ENCODE measurements at regions of chr19 and their contacts with region 1.

Region 1: GRCh38 chr19:52897144-52897935 is at the start of gene ZNF320:
- DNase-seq: peak; percentile 88
- H3K4me3 ChIP-seq: peak within 1 kb of the TSS; percentile 62 to 95 (median 70)
- H3K27ac ChIP-seq: peak within 1 kb of the TSS; percentile 80
- H3K4me1 ChIP-seq: no peaks in the 10 kb centered on the region
- H3K27me3 ChIP-seq: no peaks in the 10 kb centered on the region
- CTCF ChIP-seq: no peak
- total RNA-seq, gene ZNF320: 13.3 to 18.5 TPM

Region 2: DNA sequence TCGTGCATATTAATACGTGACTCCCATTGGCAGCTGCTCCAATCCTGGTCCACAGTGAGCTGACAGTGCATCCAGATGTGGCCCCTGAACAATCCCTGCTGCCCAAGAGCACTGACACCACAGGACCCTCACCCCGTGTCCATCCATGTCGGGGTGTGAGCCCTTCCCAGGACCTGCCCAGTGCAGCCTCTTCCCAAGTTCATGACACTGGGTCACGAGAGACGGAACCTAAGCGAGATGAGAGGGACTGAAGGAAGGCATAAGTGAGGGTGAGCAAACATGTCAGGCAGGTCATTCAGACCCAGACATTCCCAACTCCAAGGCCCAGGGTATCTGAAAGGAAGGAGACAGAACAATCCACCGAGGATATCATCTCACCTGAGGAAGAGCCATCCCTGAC is 43.5 kb before region 1 on chr19:
- CTCF ChIA-PET with region 1: no interaction called
- dilution Hi-C with region 1: no loop called
- in situ Hi-C with region 1: no loop called
- intact Hi-C with region 1: loop called (anchors 1 kb)
- DNase-seq: no peak
- H3K4me3 ChIP-seq: no peak overlapping the region
- H3K27ac ChIP-seq: no peak overlapping the region
- H3K4me1 ChIP-seq: peaks cover 3% of the 10 kb centered on the region
- H3K27me3 ChIP-seq: no peaks in the 10 kb centered on the region
- CTCF ChIP-seq: no peak

Region 3: DNA sequence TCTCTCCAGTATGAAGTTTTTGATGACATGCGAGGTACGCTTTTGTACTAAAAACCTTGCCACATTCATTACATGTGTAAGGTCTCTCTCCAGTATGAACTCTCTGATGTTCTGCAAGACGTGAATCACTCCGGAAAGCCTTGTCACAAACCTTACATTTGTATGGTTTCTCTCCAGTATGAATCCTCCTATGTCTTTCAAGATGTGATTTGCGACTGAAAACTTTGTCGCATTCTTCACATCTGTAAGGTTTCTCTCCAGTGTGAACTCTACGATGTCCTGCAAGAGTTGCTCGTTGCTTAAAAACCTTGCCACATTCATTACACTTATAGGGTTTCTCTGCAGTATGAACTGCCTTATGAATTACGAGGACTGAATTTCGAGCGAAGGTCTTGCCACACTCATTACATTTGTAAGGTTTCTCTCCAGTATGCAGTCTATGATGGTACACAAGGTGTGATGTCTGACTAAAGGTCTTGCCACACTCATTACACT is 16.4 kb before region 1 on chr19:
- CTCF ChIA-PET with region 1: no interaction called
- dilution Hi-C with region 1: no loop called
- in situ Hi-C with region 1: no loop called
- intact Hi-C with region 1: no loop called
- DNase-seq: no peak
- H3K4me3 ChIP-seq: no peak overlapping the region
- H3K27ac ChIP-seq: no peak overlapping the region
- H3K4me1 ChIP-seq: no peaks in the 10 kb centered on the region
- H3K27me3 ChIP-seq: no peaks in the 10 kb centered on the region
- CTCF ChIP-seq: no peak

Region 4: GRCh38 chr19:52962394-52963246 is 65.3 kb after region 1 on chr19 and contains the start of gene ZNF816:
- CTCF ChIA-PET with region 1: no interaction called
- dilution Hi-C with region 1: no loop called
- in situ Hi-C with region 1: no loop called
- intact Hi-C with region 1: loop called (anchors 1 kb)
- DNase-seq: peak; percentile 95
- H3K4me3 ChIP-seq: peak within 1 kb of the TSS; percentile 65 to 72 (median 71)
- H3K27ac ChIP-seq: peak within 1 kb of the TSS; percentile 50
- H3K4me1 ChIP-seq: peaks cover 8% of the 10 kb centered on the region
- H3K27me3 ChIP-seq: no peaks in the 10 kb centered on the region
- CTCF ChIP-seq: no peak
- total RNA-seq, gene ZNF816: 6.0 to 10.8 TPM

Measured in mammary epithelial cell (primary cell).